ENCODE measurements at regions of chr5 and their contacts with region 1.

Region 1: GRCh38 chr5:113059232-113060040 is 82.8 kb downstream of the DCP2 start:
- DNase-seq: no peak
- H3K4me3 ChIP-seq: no peak overlapping the region
- H3K27ac ChIP-seq: no peak overlapping the region
- H3K4me1 ChIP-seq: peaks cover 6% of the 10 kb centered on the region
- H3K27me3 ChIP-seq: no peaks in the 10 kb centered on the region
- CTCF ChIP-seq: no peak

Region 2: DNA sequence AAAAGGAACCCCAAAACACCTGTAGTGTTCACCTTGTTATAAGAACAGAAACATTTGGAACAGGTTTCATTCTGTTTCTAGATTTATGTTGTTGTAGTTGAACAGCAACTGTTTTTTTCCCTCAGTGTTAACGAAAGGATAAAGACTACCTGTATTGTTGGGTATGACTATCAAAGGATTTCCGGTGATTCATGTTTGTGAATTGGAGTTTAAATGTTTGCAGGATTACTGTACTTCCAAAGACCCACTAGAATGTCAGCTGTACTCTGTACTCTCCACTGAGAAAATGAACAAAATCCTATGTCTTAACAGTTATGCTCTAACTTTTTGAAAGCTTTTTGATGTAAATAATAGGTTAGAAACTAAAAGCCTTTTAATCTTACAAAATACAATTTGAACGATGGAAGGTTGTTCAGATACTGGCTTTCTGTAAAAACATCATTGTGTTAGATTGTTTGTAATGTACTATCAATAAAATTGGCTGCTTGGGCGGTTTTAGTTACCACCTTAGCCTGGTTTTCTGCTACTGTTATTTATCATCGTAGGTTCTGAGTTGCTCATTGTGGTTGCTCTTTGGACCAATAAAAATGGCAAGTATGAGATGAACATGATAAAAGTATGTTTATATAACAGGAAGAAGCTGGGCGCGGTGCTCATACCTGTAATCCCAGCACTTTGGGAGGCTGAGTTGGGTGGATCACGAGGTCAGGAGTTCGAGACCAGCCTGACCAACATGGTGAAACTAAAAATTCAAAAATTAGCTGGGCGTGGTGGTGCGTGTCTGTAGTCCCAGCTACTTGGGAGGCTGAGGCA is 38.8 kb before region 1 on chr5:
- CTCF ChIA-PET with region 1: no interaction called
- dilution Hi-C with region 1: no loop called
- in situ Hi-C with region 1: no loop called
- intact Hi-C with region 1: loop called (anchors 1 kb)
- DNase-seq: peak; percentile 88
- H3K4me3 ChIP-seq: no peak overlapping the region
- H3K27ac ChIP-seq: peak overlapping the region; percentile 93
- H3K4me1 ChIP-seq: peaks cover 46% of the 10 kb centered on the region
- H3K27me3 ChIP-seq: no peaks in the 10 kb centered on the region
- CTCF ChIP-seq: no peak